ENCODE measurements at regions of chr1 and their contacts with region 1.

Region 1: DNA sequence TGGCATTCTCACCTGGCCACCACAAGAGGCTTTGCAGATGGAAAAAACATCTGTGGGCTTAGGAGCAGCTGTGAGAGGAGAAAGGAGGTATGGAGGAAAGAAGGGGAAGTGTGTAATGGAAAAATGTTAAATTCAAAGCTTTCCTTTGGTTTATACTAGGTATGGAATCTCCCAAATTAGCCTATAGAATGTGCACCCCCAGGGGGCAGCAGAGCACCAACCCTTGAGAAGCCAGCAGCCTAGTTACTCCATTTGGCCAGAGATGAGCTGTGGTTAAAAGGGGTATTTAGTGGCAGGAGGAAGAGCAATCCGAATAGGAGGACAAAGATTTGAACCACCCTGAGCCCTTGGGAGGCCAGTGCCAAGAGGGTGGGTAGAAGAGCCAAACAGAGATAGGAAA is 97.5 kb upstream of the CTTNBP2NL start:
- DNase-seq: peak; percentile 15
- H3K4me3 ChIP-seq: no peak overlapping the region
- H3K27ac ChIP-seq: no peak overlapping the region
- H3K27me3 ChIP-seq: peaks cover 3% of the 10 kb centered on the region
- CTCF ChIP-seq: peak; percentile 69

Region 2: DNA sequence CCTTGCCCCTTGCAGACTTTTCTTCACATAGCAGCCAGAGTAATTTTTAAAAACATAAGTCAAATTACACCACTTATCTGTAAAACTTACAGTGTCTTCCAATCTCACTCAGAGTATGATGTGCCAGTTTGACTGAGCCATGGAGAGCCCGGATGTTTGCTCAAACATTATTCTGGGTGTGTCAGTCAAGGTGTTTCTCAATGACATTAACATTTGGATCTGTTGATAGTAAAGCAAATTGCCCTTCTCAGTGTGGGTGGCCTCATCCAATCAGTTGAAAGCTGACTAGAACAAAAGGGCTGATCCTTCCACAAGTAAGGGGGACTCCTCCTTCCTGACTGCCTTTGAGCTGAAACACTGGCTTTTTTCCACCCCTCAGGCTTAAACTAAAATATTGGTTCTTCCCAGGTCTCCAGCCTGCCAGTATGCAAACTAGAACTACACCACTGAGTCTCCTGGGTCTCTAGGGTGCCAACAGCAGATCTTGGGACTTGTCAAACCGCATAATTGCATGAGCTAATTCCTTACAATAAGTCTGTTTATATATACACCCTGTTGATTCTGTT is 60.5 kb before region 1 on chr1:
- CTCF ChIA-PET with region 1: no interaction called
- POLR2A ChIA-PET with region 1: no interaction called
- DNase-seq: no peak
- H3K4me3 ChIP-seq: no peak overlapping the region
- H3K27ac ChIP-seq: no peak overlapping the region
- H3K27me3 ChIP-seq: peaks cover 2% of the 10 kb centered on the region
- CTCF ChIP-seq: no peak

Region 3: DNA sequence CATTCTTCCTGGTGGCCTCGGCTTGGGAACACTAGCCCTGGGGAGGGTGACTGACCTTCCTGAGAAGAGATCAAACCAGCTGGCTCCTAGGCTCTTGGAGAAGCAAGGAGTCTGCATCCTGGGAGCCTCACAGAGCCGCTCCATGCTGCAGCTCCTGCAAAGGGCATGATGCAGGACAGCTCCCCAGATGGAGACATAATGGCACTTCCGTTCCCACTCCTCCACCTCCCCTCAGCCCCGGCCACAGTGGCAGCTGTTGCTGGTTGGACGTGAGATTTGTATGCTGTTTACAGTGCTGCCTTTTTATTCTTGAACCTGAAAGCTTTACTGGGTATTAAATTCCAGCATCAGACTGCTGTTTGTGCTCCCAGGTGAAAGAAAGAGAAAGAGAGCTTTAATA is 13.8 kb after region 1 on chr1:
- CTCF ChIA-PET with region 1: interaction called, 16 read pairs
- POLR2A ChIA-PET with region 1: no interaction called
- DNase-seq: no peak
- H3K4me3 ChIP-seq: no peak overlapping the region
- H3K27ac ChIP-seq: no peak overlapping the region
- H3K27me3 ChIP-seq: peaks cover 23% of the 10 kb centered on the region
- CTCF ChIP-seq: no peak

Region 4: GRCh38 chr1:112337028-112337531 is 38.5 kb after region 1 on chr1:
- CTCF ChIA-PET with region 1: interaction called, 24 read pairs
- POLR2A ChIA-PET with region 1: no interaction called
- DNase-seq: peak; percentile 11
- H3K4me3 ChIP-seq: no peak overlapping the region
- H3K27ac ChIP-seq: no peak overlapping the region
- H3K27me3 ChIP-seq: peaks cover 36% of the 10 kb centered on the region
- CTCF ChIP-seq: peak; percentile 69

Region 5: GRCh38 chr1:112369392-112370285 is 71.1 kb after region 1 on chr1:
- CTCF ChIA-PET with region 1: interaction called, 30 read pairs
- POLR2A ChIA-PET with region 1: no interaction called
- DNase-seq: peak; percentile 44
- H3K4me3 ChIP-seq: no peak overlapping the region
- H3K27ac ChIP-seq: no peak overlapping the region
- H3K27me3 ChIP-seq: peaks cover 24% of the 10 kb centered on the region
- CTCF ChIP-seq: peak; percentile 99

Measured in AG04450 (cell line).